Naive thymus-derived CD4-positive, alpha-beta T cell (primary cell): ENCODE measurements at regions of chr1 and their contacts with region 1.

Region 1: GRCh38 chr1:147172168-147172992 is at the start of gene PRKAB2:
- DNase-seq: peak; percentile 67 to 95 (median 86)
- ATAC-seq: peak; percentile 93
- H3K4me3 ChIP-seq: peak within 1 kb of the TSS; percentile 91
- H3K4me3 Mint-ChIP-seq: peak within 1 kb of the TSS; percentile 82 to 99 (median 98)
- H3K27ac ChIP-seq: peak within 1 kb of the TSS; percentile 76
- H3K27ac Mint-ChIP-seq: peak within 1 kb of the TSS; percentile 66 to 96 (median 95)
- H3K4me1 ChIP-seq: peaks cover 15% of the 10 kb centered on the region in 2 donors
- H3K4me1 Mint-ChIP-seq: peaks cover 19 to 55% (median 41%) of the 10 kb centered on the region in 7 donors
- H3K27me3 ChIP-seq: no peaks in the 10 kb centered on the region
- H3K27me3 Mint-ChIP-seq: peaks cover 0 to 10% (median 0%) of the 10 kb centered on the region in 5 donors
- total RNA-seq, gene PRKAB2: 8.1 to 26.9 (median 11.4) TPM

Region 2: GRCh38 chr1:147046189-147046862 is 126.1 kb before region 1 on chr1:
- CTCF ChIA-PET with region 1: no interaction called
- POLR2A ChIA-PET with region 1: interaction called, 10 read pairs
- intact Hi-C with region 1: no loop called
- DNase-seq: peak in 1 of 9 donors; percentile 2
- ATAC-seq: no peak
- H3K4me3 ChIP-seq: no peak overlapping the region
- H3K4me3 Mint-ChIP-seq: peak overlapping the region in 7 of 10 donors; percentile 63 to 80 (median 70)
- H3K27ac ChIP-seq: no peak overlapping the region
- H3K27ac Mint-ChIP-seq: peak overlapping the region in 7 of 9 donors; percentile 10 to 90 (median 79)
- H3K4me1 ChIP-seq: peaks cover 0 to 7% of the 10 kb centered on the region in 2 donors
- H3K4me1 Mint-ChIP-seq: peaks cover 12 to 67% (median 40%) of the 10 kb centered on the region in 7 donors
- H3K27me3 ChIP-seq: no peaks in the 10 kb centered on the region
- H3K27me3 Mint-ChIP-seq: peaks cover 0 to 12% (median 1%) of the 10 kb centered on the region in 5 donors

Region 3: DNA sequence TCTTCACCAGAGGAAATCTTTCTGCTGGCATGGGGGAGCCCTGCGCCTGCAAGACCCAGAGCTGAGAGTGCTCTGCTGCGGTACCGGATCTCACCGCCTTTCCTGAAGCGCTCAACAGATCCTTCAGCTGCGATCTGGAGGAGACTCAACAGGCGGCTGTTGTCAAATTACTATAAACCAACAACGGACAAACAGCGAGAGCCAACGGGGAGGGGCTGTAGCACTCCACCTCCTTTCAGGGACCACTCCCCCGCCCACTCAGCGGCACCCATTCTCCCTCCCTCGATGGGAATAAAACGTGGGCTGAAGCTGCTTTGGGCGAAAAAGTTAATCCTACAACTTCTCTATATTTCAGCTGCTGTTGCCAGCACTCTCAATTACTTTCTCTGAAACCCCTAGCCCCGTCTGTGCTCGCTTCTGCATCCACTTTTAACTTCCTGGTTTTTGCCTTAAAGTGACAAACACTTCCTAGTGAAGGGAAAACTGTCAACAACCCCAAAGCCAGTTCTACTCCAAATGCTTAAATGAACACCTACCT is 52.9 kb after region 1 on chr1 and contains the start of gene FMO5:
- CTCF ChIA-PET with region 1: interaction called, 3 read pairs
- POLR2A ChIA-PET with region 1: no interaction called
- intact Hi-C with region 1: loop called in 1 of 2 experiments (anchors 1 kb)
- DNase-seq: peak; percentile 21 to 54 (median 40)
- ATAC-seq: peak; percentile 95
- H3K4me3 ChIP-seq: peak within 1 kb of the TSS; percentile 70
- H3K4me3 Mint-ChIP-seq: peak within 1 kb of the TSS; percentile 89 to 99 (median 94)
- H3K27ac ChIP-seq: peak within 1 kb of the TSS; percentile 53
- H3K27ac Mint-ChIP-seq: peak within 1 kb of the TSS; percentile 67 to 92 (median 76)
- H3K4me1 ChIP-seq: peaks cover 0 to 5% of the 10 kb centered on the region in 2 donors
- H3K4me1 Mint-ChIP-seq: peaks cover 15 to 29% (median 21%) of the 10 kb centered on the region in 7 donors
- H3K27me3 ChIP-seq: no peaks in the 10 kb centered on the region
- H3K27me3 Mint-ChIP-seq: peaks cover 0 to 15% (median 0%) of the 10 kb centered on the region in 5 donors
- total RNA-seq, gene FMO5: 0.29 to 4.3 (median 0.70) TPM

Region 4: GRCh38 chr1:147242439-147243227 is 70.3 kb after region 1 on chr1 and contains the start of gene CHD1L:
- CTCF ChIA-PET with region 1: interaction called, 35 read pairs
- POLR2A ChIA-PET with region 1: interaction called, 14 read pairs
- intact Hi-C with region 1: loop called (anchors 1 kb)
- DNase-seq: peak; percentile 84 to 94 (median 92)
- ATAC-seq: peak; percentile 97
- H3K4me3 ChIP-seq: peak within 1 kb of the TSS; percentile 90
- H3K4me3 Mint-ChIP-seq: peak within 1 kb of the TSS; percentile 89 to 98 (median 95)
- H3K27ac ChIP-seq: peak within 1 kb of the TSS; percentile 78
- H3K27ac Mint-ChIP-seq: peak within 1 kb of the TSS; percentile 32 to 89 (median 70)
- H3K4me1 ChIP-seq: peaks cover 7 to 16% of the 10 kb centered on the region in 2 donors
- H3K4me1 Mint-ChIP-seq: peaks cover 24 to 46% (median 42%) of the 10 kb centered on the region in 7 donors
- H3K27me3 ChIP-seq: no peaks in the 10 kb centered on the region
- H3K27me3 Mint-ChIP-seq: peaks cover 0 to 9% (median 0%) of the 10 kb centered on the region in 5 donors
- total RNA-seq, gene CHD1L: 26.4 to 53.9 (median 32.3) TPM

Region 5: DNA sequence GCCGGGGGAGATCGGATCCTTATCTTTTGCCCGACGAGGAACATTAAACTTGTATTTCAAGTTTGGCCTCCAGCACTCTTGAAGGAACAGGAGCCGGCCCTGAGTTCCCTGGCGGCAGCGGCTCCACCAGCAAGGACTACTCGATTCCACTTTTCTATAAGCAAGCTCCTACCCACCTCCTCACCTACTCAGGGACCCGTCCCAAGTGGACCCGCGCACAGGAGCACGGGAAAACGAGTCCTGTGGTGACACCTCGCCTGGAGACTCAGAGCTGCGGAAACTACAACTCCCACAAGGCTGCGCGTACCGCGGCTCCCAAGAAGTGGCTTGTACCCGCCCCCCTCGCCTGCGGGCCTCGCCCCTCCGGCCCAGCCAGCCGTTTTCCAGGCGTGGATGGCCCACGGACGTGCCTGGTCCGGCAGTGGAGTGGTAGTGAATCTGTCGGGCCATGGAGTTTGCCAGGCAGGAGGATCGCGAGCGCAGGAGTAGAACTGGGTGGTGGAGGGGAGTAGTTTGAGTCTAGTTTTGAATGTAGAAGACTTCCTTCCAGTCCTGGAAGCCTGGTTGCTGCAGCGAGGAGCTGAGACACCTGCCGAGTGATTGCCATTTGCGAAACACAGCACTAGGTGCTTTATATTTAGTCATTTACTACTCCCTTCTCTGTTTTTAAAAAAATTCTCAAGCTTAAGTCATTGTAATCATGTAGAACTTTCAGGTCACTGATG is 498.1 kb after region 1 on chr1 and contains the start of gene ACP6:
- CTCF ChIA-PET with region 1: no interaction called
- POLR2A ChIA-PET with region 1: no interaction called
- intact Hi-C with region 1: loop called in 1 of 2 experiments (anchors 2 kb)
- DNase-seq: peak; percentile 61 to 86 (median 82)
- ATAC-seq: peak; percentile 98
- H3K4me3 ChIP-seq: peak within 1 kb of the TSS; percentile 78
- H3K4me3 Mint-ChIP-seq: peak within 1 kb of the TSS; percentile 93 to 98 (median 97)
- H3K27ac ChIP-seq: peak within 1 kb of the TSS; percentile 69
- H3K27ac Mint-ChIP-seq: peak within 1 kb of the TSS; percentile 83 to 94 (median 89)
- H3K4me1 ChIP-seq: peaks cover 0 to 7% of the 10 kb centered on the region in 2 donors
- H3K4me1 Mint-ChIP-seq: peaks cover 15 to 38% (median 29%) of the 10 kb centered on the region in 7 donors
- H3K27me3 ChIP-seq: no peaks in the 10 kb centered on the region
- H3K27me3 Mint-ChIP-seq: peaks cover 0 to 27% (median 12%) of the 10 kb centered on the region in 5 donors
- total RNA-seq, gene ACP6: 10.3 to 22.4 (median 16.6) TPM

Region 6: GRCh38 chr1:147741065-147741464 is 568.7 kb after region 1 on chr1:
- CTCF ChIA-PET with region 1: no interaction called
- POLR2A ChIA-PET with region 1: no interaction called
- intact Hi-C with region 1: no loop called
- DNase-seq: no peak
- ATAC-seq: no peak
- H3K4me3 ChIP-seq: no peak overlapping the region
- H3K4me3 Mint-ChIP-seq: no peak overlapping the region
- H3K27ac ChIP-seq: no peak overlapping the region
- H3K27ac Mint-ChIP-seq: no peak overlapping the region
- H3K4me1 ChIP-seq: no peaks in the 10 kb centered on the region
- H3K4me1 Mint-ChIP-seq: no peaks in the 10 kb centered on the region
- H3K27me3 ChIP-seq: no peaks in the 10 kb centered on the region
- H3K27me3 Mint-ChIP-seq: peaks cover 0 to 10% (median 3%) of the 10 kb centered on the region in 5 donors